ENCODE measurements at regions of chr7 and their contacts with region 1.

Region 1: DNA sequence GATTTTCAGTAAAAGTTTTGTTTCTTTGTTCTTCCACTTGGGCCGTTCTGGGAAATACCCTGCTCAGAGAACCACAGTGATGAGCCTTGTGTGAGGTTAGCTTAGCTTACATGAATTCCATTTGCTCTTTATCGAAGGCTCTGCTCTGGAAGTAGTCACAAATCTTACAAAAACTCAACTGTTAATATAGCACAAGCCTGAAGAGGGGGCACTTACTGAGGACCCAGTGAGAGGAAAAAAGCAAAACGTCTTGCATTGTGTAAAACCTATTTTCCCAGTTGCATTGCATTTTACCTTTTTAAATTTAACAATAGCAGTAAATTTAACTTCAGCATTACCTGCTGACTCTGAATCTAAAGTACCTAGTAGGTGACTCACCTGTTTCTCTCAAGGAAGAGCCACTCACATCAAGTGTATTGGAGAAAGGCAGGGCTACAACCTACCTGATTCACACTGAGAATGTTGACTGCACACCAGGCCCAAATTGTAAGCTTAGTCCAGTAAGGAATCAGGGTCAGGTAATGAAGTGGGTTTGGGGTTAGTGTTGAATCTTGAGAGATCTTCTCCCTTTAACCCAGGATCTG is 42.3 kb downstream of the PPP1R17 start:
- DNase-seq: no peak
- H3K4me3 ChIP-seq: no peak overlapping the region
- H3K27ac ChIP-seq: no peak overlapping the region
- H3K4me1 ChIP-seq: no peaks in the 10 kb centered on the region
- H3K27me3 ChIP-seq: no peaks in the 10 kb centered on the region; a peak in 1 of 7 replicates
- CTCF ChIP-seq: peak in 2 of 3 experiments; percentile 38 to 41; a peak in 2 of 4 replicates
- EP300 ChIP-seq: no peak
- POLR2A ChIP-seq: no peak
- RAD21 ChIP-seq: peak in 1 of 2 experiments; percentile 34; a peak in 2 of 4 replicates

Region 2: GRCh38 chr7:31705377-31705776 is 23.9 kb before region 1 on chr7:
- CTCF ChIA-PET with region 1: interaction called, 27 read pairs
- POLR2A ChIA-PET with region 1: no interaction called
- DNase-seq: no peak
- H3K4me3 ChIP-seq: no peak overlapping the region
- H3K27ac ChIP-seq: no peak overlapping the region
- H3K4me1 ChIP-seq: peaks cover 0 to 7% (median 2%) of the 10 kb centered on the region in 4 experiments; a peak in 2 of 7 replicates
- H3K27me3 ChIP-seq: peaks cover 0 to 16% (median under 1%) of the 10 kb centered on the region in 4 experiments; a peak in 4 of 7 replicates
- CTCF ChIP-seq: no peak
- EP300 ChIP-seq: no peak
- POLR2A ChIP-seq: no peak
- RAD21 ChIP-seq: no peak

Region 3: GRCh38 chr7:31805209-31805818 is 76.0 kb after region 1 on chr7:
- CTCF ChIA-PET with region 1: no interaction called
- POLR2A ChIA-PET with region 1: no interaction called
- DNase-seq: no peak
- H3K4me3 ChIP-seq: no peak overlapping the region
- H3K27ac ChIP-seq: no peak overlapping the region
- H3K4me1 ChIP-seq: no peaks in the 10 kb centered on the region
- H3K27me3 ChIP-seq: no peaks in the 10 kb centered on the region
- CTCF ChIP-seq: no peak
- EP300 ChIP-seq: no peak
- POLR2A ChIP-seq: no peak
- RAD21 ChIP-seq: no peak

Region 4: DNA sequence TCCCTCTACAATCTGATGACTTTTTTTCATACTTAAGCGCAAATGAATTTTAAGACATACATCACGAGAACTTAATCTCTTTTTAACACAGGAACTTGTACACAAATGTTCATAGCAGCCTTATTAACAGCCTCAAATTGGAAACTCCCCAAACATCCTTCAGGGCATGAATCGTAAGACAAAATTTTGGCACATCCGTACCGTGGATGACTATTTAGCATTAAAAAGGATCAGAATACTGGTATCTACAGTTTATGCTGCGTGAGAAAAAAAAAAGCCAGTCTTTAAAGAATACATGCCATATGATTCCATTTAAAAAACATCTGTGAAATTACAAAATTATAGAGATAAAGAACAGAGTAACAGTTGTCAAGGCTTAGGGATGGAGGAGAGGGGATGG is 294.1 kb after region 1 on chr7:
- CTCF ChIA-PET with region 1: no interaction called
- POLR2A ChIA-PET with region 1: no interaction called
- DNase-seq: no peak
- H3K4me3 ChIP-seq: no peak overlapping the region
- H3K27ac ChIP-seq: no peak overlapping the region
- H3K4me1 ChIP-seq: no peaks in the 10 kb centered on the region
- H3K27me3 ChIP-seq: no peaks in the 10 kb centered on the region
- CTCF ChIP-seq: no peak
- EP300 ChIP-seq: no peak
- POLR2A ChIP-seq: no peak
- RAD21 ChIP-seq: no peak

Measured in H1 (cell line).